A673 (cell line): ENCODE measurements at regions of chr13 and their contacts with region 1.

Region 1: GRCh38 chr13:37510441-37510840 is 88.1 kb downstream of the POSTN start:
- DNase-seq: no peak
- H3K4me3 ChIP-seq: no peak overlapping the region
- H3K27ac ChIP-seq: no peak overlapping the region
- H3K4me1 ChIP-seq: no peaks in the 10 kb centered on the region
- H3K27me3 ChIP-seq: no peaks in the 10 kb centered on the region
- CTCF ChIP-seq: no peak

Region 2: GRCh38 chr13:36981156-36981743 is 529.2 kb before region 1 on chr13:
- CTCF ChIA-PET with region 1: no interaction called
- POLR2A ChIA-PET with region 1: no interaction called
- intact Hi-C with region 1: no loop called
- DNase-seq: peak; percentile 81
- H3K4me3 ChIP-seq: no peak overlapping the region
- H3K27ac ChIP-seq: peak overlapping the region; percentile 69
- H3K4me1 ChIP-seq: peaks cover 17% of the 10 kb centered on the region
- H3K27me3 ChIP-seq: no peaks in the 10 kb centered on the region
- CTCF ChIP-seq: peak; percentile 69

Region 3: DNA sequence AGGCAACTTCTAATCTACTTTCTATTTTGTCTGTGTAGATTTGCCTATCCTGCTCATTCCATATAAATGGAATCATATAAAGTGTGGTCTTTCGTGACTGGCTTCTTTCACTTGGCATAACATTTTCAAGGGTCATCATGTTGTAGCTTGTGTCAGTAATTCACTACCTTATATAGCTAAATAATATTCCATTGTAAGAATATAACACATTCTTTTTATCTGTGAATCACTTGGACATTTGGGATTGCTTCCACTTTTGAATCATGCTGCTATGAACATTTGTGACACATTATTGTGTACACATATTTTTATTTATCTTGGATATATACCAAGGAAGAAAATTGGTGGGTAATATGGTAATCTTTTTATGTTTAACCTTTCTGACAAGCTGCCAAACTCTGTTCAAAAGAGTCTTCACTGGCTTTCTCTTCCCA is 316.0 kb before region 1 on chr13:
- CTCF ChIA-PET with region 1: no interaction called
- POLR2A ChIA-PET with region 1: no interaction called
- intact Hi-C with region 1: no loop called
- DNase-seq: no peak
- H3K4me3 ChIP-seq: no peak overlapping the region
- H3K27ac ChIP-seq: no peak overlapping the region
- H3K4me1 ChIP-seq: peaks cover 12% of the 10 kb centered on the region
- H3K27me3 ChIP-seq: no peaks in the 10 kb centered on the region
- CTCF ChIP-seq: no peak

Region 4: GRCh38 chr13:37495046-37495445 is 15.4 kb before region 1 on chr13:
- CTCF ChIA-PET with region 1: no interaction called
- POLR2A ChIA-PET with region 1: no interaction called
- intact Hi-C with region 1: loop called (anchors 1 kb)
- DNase-seq: no peak
- H3K4me3 ChIP-seq: no peak overlapping the region
- H3K27ac ChIP-seq: no peak overlapping the region
- H3K4me1 ChIP-seq: no peaks in the 10 kb centered on the region
- H3K27me3 ChIP-seq: no peaks in the 10 kb centered on the region
- CTCF ChIP-seq: no peak